Panc1 (cell line): ENCODE measurements at regions of chr5 and their contacts with region 1.

Region 1: GRCh38 chr5:141359790-141360426 is at the start of gene PCDHGB2:
- DNase-seq: peak; percentile 39
- ATAC-seq: peak; percentile 85
- H3K4me3 ChIP-seq: peak within 1 kb of the TSS; percentile 41 to 82
- H3K27ac ChIP-seq: no peak within 1 kb of the TSS
- H3K4me1 ChIP-seq: no peaks in the 10 kb centered on the region
- H3K27me3 ChIP-seq: no peaks in the 10 kb centered on the region
- CTCF ChIP-seq: peak; percentile 75
- total RNA-seq, gene PCDHGB2: 5.3 TPM

Region 2: GRCh38 chr5:141564216-141564692 is 204.3 kb after region 1 on chr5:
- CTCF ChIA-PET with region 1: no interaction called
- POLR2A ChIA-PET with region 1: no interaction called
- in situ Hi-C with region 1: no loop called
- intact Hi-C with region 1: loop called (anchors 2 kb)
- DNase-seq: peak; percentile 87
- ATAC-seq: peak; percentile 90
- H3K4me3 ChIP-seq: no peak overlapping the region
- H3K27ac ChIP-seq: peak overlapping the region; percentile 83
- H3K4me1 ChIP-seq: peaks cover 12% of the 10 kb centered on the region
- H3K27me3 ChIP-seq: no peaks in the 10 kb centered on the region
- CTCF ChIP-seq: peak; percentile 91